Dorsolateral prefrontal cortex (tissue), 120 donors: ENCODE measurements at regions of chr3 and their contacts with region 1.

Region 1: DNA sequence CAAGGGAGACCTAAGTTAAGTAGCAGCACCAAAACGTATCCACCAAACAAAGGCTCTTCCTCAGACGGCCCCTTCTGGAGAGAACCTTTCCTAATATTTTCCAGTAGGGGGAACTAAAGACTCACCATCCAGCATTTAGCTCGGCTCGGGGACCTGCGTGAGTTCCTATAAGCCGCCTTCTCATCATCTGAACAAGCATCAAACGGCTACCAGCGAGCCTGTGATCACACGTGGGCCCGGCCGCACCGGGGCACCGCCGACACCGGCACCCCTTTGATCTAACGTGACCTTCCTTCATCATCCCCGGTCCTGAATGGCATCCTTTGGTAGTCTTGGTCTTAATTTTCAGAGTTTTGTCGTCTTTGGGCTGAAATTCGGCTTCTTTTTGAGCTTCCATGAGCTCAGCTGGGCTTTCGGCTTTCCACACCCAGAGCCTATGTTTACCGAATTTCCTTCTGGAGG is 1.4 kb upstream of the ROBO2 start:
- DNase-seq: peak; percentile 27 to 87 (median 74)
- H3K4me3 ChIP-seq: peak overlapping the region; percentile 33 to 80 (median 66)
- H3K27ac ChIP-seq: peak overlapping the region in 47 of 59 donors; percentile 10 to 84 (median 65)
- H3K27me3 ChIP-seq: peaks cover 0 to 31% (median 0%) of the 10 kb centered on the region in 45 donors
- CTCF ChIP-seq: peak; percentile 39 to 91 (median 77)

Region 2: GRCh38 chr3:77254967-77255831 is 216.7 kb after region 1 on chr3:
- intact Hi-C with region 1: loop called (anchors 1 to 2 kb)
- DNase-seq: peak in 2 of 10 donors; percentile 15 to 17
- H3K4me3 ChIP-seq: no peak overlapping the region
- H3K27ac ChIP-seq: no peak overlapping the region
- H3K27me3 ChIP-seq: peaks cover 0 to 5% (median 0%) of the 10 kb centered on the region in 45 donors
- CTCF ChIP-seq: peak; percentile 49 to 88 (median 76)

Region 3: DNA sequence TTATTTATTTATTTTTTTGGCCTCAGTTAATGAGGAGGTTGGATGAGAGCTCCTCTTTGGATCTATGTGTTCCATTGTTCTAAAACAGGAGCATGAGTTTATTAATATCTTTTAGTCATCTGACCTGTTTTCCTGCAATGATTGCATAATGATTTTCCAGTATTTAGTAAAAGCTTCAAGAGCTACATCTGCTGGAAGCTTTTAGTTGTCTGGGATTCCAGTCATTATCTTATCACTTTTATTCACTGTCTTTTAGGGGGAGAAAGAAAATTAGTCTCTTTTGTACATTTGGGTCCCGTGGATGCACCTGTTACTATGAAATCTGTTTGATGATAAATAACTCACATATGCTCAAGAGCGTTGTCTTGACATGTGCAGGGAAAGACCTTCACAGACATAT is 1459.3 kb after region 1 on chr3:
- intact Hi-C with region 1: loop called in 1 of 2 experiments (anchors 10 kb)
- DNase-seq: no peak
- H3K4me3 ChIP-seq: no peak overlapping the region
- H3K27ac ChIP-seq: peak overlapping the region in 8 of 59 donors; percentile 3 to 62 (median 39)
- H3K27me3 ChIP-seq: no peaks in the 10 kb centered on the region
- CTCF ChIP-seq: peak in 1 of 56 donors; percentile 11

Region 4: GRCh38 chr3:78644847-78645246 is 1606.3 kb after region 1 on chr3:
- intact Hi-C with region 1: loop called in 1 of 2 experiments (anchors 5 kb)
- DNase-seq: no peak
- H3K4me3 ChIP-seq: no peak overlapping the region
- H3K27ac ChIP-seq: no peak overlapping the region
- H3K27me3 ChIP-seq: no peaks in the 10 kb centered on the region
- CTCF ChIP-seq: no peak